Heart right ventricle (tissue), 16 donors: ENCODE measurements at regions of chrX and their contacts with region 1.

Region 1: GRCh38 chrX:10052906-10053625 is 85.9 kb downstream of the CLDN34 start:
- DNase-seq: peak in 1 of 2 donors; percentile 43
- ATAC-seq: peak; percentile 54 to 90 (median 75)
- H3K4me3 ChIP-seq: no peak overlapping the region
- H3K27ac ChIP-seq: peak overlapping the region in 8 of 10 donors; percentile 52 to 73 (median 63)
- H3K4me1 ChIP-seq: peaks cover 0 to 65% (median 53%) of the 10 kb centered on the region in 9 donors
- H3K27me3 ChIP-seq: peaks cover 0 to 3% (median 0%) of the 10 kb centered on the region in 7 donors
- CTCF ChIP-seq: peak in 1 of 9 donors; percentile 9

Region 2: DNA sequence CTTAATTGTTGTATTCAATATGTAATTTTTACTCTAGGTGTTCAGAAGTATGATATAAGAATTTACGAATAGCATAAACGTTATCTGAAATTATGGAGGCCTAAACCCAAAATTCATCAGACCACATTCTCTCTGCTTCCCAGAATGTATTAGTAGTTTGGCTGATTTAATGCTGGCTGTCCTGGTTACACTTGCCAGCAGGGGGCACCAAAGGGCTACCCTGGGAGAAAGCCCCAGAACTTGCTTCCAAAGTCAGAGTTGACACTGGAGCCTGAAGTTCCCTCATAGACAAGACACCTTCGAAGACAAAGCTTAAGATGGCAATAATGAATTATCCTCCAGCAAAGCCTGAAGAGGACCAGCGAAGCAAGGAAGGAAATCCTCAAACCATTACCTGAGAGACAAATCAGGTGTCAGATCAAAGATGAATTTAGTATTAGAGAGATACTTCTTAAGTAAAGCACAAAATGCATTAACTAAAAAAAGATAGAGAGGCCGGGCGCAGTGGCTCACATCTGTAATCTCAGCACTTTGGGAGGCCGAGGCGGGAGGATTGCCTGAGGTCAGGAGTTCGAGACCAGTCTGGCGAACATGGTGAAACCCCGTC is 1309.8 kb before region 1 on chrX:
- intact Hi-C with region 1: no loop called
- DNase-seq: peak; percentile 17 to 28
- ATAC-seq: no peak
- H3K4me3 ChIP-seq: no peak overlapping the region
- H3K27ac ChIP-seq: no peak overlapping the region
- H3K4me1 ChIP-seq: no peaks in the 10 kb centered on the region
- H3K27me3 ChIP-seq: peaks cover 0 to 7% (median 0%) of the 10 kb centered on the region in 7 donors
- CTCF ChIP-seq: peak in 8 of 9 donors; percentile 42 to 77 (median 58)

Region 3: DNA sequence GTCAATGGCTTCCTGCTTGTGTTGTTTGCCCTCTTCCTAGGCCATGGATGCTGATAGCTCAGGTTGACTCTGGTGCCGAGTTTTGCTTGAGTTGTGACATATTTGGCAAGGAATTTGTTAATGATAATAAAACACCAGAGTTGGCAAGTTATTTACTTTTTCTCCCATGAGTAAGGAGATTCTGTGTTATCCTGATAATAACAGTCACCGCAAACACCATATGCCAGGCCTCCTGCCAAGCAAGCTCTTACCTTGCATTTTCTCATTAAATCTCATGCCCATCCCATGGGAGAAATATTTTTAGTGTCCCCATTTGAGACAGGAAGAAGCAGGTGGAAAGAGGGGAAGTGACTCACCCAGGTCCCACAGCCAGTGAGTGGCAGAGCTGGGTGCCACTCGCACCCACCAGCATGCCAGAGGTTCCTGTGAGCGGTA is 36.3 kb after region 1 on chrX:
- intact Hi-C with region 1: loop called in 1 of 10 experiments (anchors 5 kb)
- DNase-seq: no peak
- ATAC-seq: no peak
- H3K4me3 ChIP-seq: no peak overlapping the region
- H3K27ac ChIP-seq: peak overlapping the region in 1 of 10 donors; percentile 29
- H3K4me1 ChIP-seq: peaks cover 0 to 48% (median 26%) of the 10 kb centered on the region in 9 donors
- H3K27me3 ChIP-seq: peaks cover 0 to 6% (median 0%) of the 10 kb centered on the region in 7 donors
- CTCF ChIP-seq: no peak